Colonic mucosa (tissue), 4 donors: ENCODE measurements at regions of chrX and their contacts with region 1.

Region 1: GRCh38 chrX:43557792-43558191 is 98.3 kb upstream of the MAOA start:
- DNase-seq: peak; percentile 75
- H3K4me3 ChIP-seq: no peak overlapping the region
- H3K27ac ChIP-seq: no peak overlapping the region
- H3K4me1 ChIP-seq: no peaks in the 10 kb centered on the region
- H3K27me3 ChIP-seq: no peaks in the 10 kb centered on the region
- CTCF ChIP-seq: peak; percentile 56

Region 2: GRCh38 chrX:41796577-41796976 is 1761.2 kb before region 1 on chrX:
- intact Hi-C with region 1: loop called (anchors 10 kb)
- DNase-seq: no peak
- H3K4me3 ChIP-seq: no peak overlapping the region
- H3K27ac ChIP-seq: no peak overlapping the region
- H3K4me1 ChIP-seq: no peaks in the 10 kb centered on the region
- H3K27me3 ChIP-seq: no peaks in the 10 kb centered on the region
- CTCF ChIP-seq: no peak

Region 3: GRCh38 chrX:43349363-43349762 is 208.4 kb before region 1 on chrX:
- intact Hi-C with region 1: loop called (anchors 5 kb)
- DNase-seq: peak; percentile 56
- H3K4me3 ChIP-seq: no peak overlapping the region
- H3K27ac ChIP-seq: no peak overlapping the region
- H3K4me1 ChIP-seq: no peaks in the 10 kb centered on the region
- H3K27me3 ChIP-seq: no peaks in the 10 kb centered on the region
- CTCF ChIP-seq: peak; percentile 82

Region 4: GRCh38 chrX:43750248-43750676 is 192.5 kb after region 1 on chrX:
- intact Hi-C with region 1: loop called (anchors 2 kb)
- DNase-seq: peak; percentile 58
- H3K4me3 ChIP-seq: no peak overlapping the region
- H3K27ac ChIP-seq: no peak overlapping the region
- H3K4me1 ChIP-seq: no peaks in the 10 kb centered on the region
- H3K27me3 ChIP-seq: no peaks in the 10 kb centered on the region
- CTCF ChIP-seq: peak; percentile 62